ENCODE measurements at regions of chr17 and their contacts with region 1.

Region 1: GRCh38 chr17:2336215-2336851 is at the start of gene TSR1:
- DNase-seq: peak; percentile 86 to 88 (median 87)
- H3K4me3 ChIP-seq: peak within 1 kb of the TSS; percentile 94 to 97
- H3K4me3 Mint-ChIP-seq: peak within 1 kb of the TSS; percentile 97 to 100 (median 99)
- H3K27ac ChIP-seq: peak within 1 kb of the TSS; percentile 70
- H3K27ac Mint-ChIP-seq: peak within 1 kb of the TSS; percentile 93 to 98 (median 96)
- H3K4me1 ChIP-seq: peaks cover 20% of the 10 kb centered on the region
- H3K4me1 Mint-ChIP-seq: peaks cover 18 to 34% (median 26%) of the 10 kb centered on the region in 4 donors
- H3K27me3 ChIP-seq: no peaks in the 10 kb centered on the region
- H3K27me3 Mint-ChIP-seq: no peaks in the 10 kb centered on the region
- total RNA-seq, gene TSR1: 22.6 to 31.7 TPM

Region 2: DNA sequence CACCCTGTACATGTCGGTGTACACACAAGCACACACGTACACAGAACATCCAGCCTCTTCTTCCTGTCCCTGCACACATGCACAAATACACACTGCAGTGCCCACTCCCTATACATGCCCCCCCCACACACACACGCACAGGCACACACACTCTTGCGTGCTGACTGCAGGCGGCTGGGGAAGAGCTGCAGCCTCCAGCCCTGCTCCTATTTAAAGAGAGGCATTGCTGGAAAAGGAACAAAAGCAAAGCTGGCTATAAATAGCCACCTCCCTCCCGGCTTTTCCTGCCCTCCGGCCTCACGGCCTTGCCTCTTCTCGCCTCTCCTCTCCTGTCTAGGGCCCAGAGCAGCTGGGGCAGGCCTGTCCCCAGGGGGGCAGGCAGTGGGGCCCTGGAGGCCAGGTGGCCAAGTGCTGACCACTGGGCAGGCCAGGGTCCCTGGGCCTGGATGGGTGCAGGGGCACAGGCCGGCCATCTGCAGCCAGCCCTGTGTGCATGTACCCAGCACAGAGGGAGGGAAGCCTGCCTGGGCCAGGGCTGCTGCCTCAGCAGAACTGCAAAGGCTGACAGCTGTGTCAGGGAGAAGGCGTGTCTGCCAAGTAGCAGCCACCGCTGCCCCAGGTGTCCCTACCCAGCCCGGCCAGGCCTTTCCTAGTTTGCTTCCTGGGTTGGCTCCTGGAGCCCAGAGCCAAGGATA is 336.6 kb before region 1 on chr17:
- CTCF ChIA-PET with region 1: no interaction called
- POLR2A ChIA-PET with region 1: no interaction called
- intact Hi-C with region 1: no loop called
- DNase-seq: no peak
- H3K4me3 ChIP-seq: no peak overlapping the region
- H3K4me3 Mint-ChIP-seq: peak overlapping the region in 7 of 8 donors; percentile 25 to 71 (median 61)
- H3K27ac ChIP-seq: no peak overlapping the region
- H3K27ac Mint-ChIP-seq: peak overlapping the region in 1 of 7 donors; percentile 31
- H3K4me1 ChIP-seq: no peaks in the 10 kb centered on the region
- H3K4me1 Mint-ChIP-seq: peaks cover 4 to 11% (median 7%) of the 10 kb centered on the region in 4 donors
- H3K27me3 ChIP-seq: peaks cover 4% of the 10 kb centered on the region
- H3K27me3 Mint-ChIP-seq: peaks cover 16% of the 10 kb centered on the region in 2 donors

Region 3: GRCh38 chr17:2347547-2348307 is 11.4 kb after region 1 on chr17:
- CTCF ChIA-PET with region 1: interaction called, 55 read pairs
- POLR2A ChIA-PET with region 1: interaction called, 63 read pairs
- intact Hi-C with region 1: no loop called
- DNase-seq: no peak
- H3K4me3 ChIP-seq: no peak overlapping the region
- H3K4me3 Mint-ChIP-seq: no peak overlapping the region
- H3K27ac ChIP-seq: no peak overlapping the region
- H3K27ac Mint-ChIP-seq: no peak overlapping the region
- H3K4me1 ChIP-seq: peaks cover 9% of the 10 kb centered on the region
- H3K4me1 Mint-ChIP-seq: peaks cover 1 to 16% (median 12%) of the 10 kb centered on the region in 4 donors
- H3K27me3 ChIP-seq: no peaks in the 10 kb centered on the region
- H3K27me3 Mint-ChIP-seq: no peaks in the 10 kb centered on the region

Region 4: GRCh38 chr17:2392252-2393173 is 56.2 kb after region 1 on chr17:
- CTCF ChIA-PET with region 1: interaction called, 3 read pairs
- POLR2A ChIA-PET with region 1: interaction called, 29 read pairs
- intact Hi-C with region 1: no loop called
- DNase-seq: peak; percentile 95 to 99 (median 98)
- H3K4me3 ChIP-seq: peak overlapping the region; percentile 38 to 91
- H3K4me3 Mint-ChIP-seq: peak overlapping the region; percentile 88 to 98 (median 96)
- H3K27ac ChIP-seq: peak overlapping the region; percentile 100
- H3K27ac Mint-ChIP-seq: peak overlapping the region; percentile 95 to 100 (median 99)
- H3K4me1 ChIP-seq: peaks cover 60% of the 10 kb centered on the region
- H3K4me1 Mint-ChIP-seq: peaks cover 31 to 69% (median 49%) of the 10 kb centered on the region in 4 donors
- H3K27me3 ChIP-seq: no peaks in the 10 kb centered on the region
- H3K27me3 Mint-ChIP-seq: peaks cover 0 to 1% of the 10 kb centered on the region in 2 donors

Region 5: GRCh38 chr17:2401426-2402221 is 65.3 kb after region 1 on chr17:
- CTCF ChIA-PET with region 1: no interaction called
- POLR2A ChIA-PET with region 1: interaction called, 20 read pairs
- intact Hi-C with region 1: loop called (anchors 2 kb)
- DNase-seq: peak; percentile 99 to 100 (median 100)
- H3K4me3 ChIP-seq: peak overlapping the region; percentile 65 to 89
- H3K4me3 Mint-ChIP-seq: peak overlapping the region; percentile 90 to 100 (median 98)
- H3K27ac ChIP-seq: peak overlapping the region; percentile 95
- H3K27ac Mint-ChIP-seq: peak overlapping the region; percentile 99 to 100 (median 100)
- H3K4me1 ChIP-seq: peaks cover 35% of the 10 kb centered on the region
- H3K4me1 Mint-ChIP-seq: peaks cover 18 to 54% (median 33%) of the 10 kb centered on the region in 4 donors
- H3K27me3 ChIP-seq: no peaks in the 10 kb centered on the region
- H3K27me3 Mint-ChIP-seq: peaks cover 0 to 8% of the 10 kb centered on the region in 2 donors

Region 6: GRCh38 chr17:2453325-2453724 is 117.0 kb after region 1 on chr17:
- CTCF ChIA-PET with region 1: no interaction called
- POLR2A ChIA-PET with region 1: no interaction called
- intact Hi-C with region 1: no loop called
- DNase-seq: no peak
- H3K4me3 ChIP-seq: no peak overlapping the region
- H3K4me3 Mint-ChIP-seq: no peak overlapping the region
- H3K27ac ChIP-seq: no peak overlapping the region
- H3K27ac Mint-ChIP-seq: peak overlapping the region in 6 of 7 donors; percentile 4 to 87 (median 38)
- H3K4me1 ChIP-seq: no peaks in the 10 kb centered on the region
- H3K4me1 Mint-ChIP-seq: peaks cover 4 to 8% (median 7%) of the 10 kb centered on the region in 4 donors
- H3K27me3 ChIP-seq: no peaks in the 10 kb centered on the region
- H3K27me3 Mint-ChIP-seq: no peaks in the 10 kb centered on the region

Measured in CD4-positive, alpha-beta memory T cell (primary cell).